Sigmoid colon (tissue), 7 donors: ENCODE measurements at regions of chr13 and their contacts with region 1.

Region 1: DNA sequence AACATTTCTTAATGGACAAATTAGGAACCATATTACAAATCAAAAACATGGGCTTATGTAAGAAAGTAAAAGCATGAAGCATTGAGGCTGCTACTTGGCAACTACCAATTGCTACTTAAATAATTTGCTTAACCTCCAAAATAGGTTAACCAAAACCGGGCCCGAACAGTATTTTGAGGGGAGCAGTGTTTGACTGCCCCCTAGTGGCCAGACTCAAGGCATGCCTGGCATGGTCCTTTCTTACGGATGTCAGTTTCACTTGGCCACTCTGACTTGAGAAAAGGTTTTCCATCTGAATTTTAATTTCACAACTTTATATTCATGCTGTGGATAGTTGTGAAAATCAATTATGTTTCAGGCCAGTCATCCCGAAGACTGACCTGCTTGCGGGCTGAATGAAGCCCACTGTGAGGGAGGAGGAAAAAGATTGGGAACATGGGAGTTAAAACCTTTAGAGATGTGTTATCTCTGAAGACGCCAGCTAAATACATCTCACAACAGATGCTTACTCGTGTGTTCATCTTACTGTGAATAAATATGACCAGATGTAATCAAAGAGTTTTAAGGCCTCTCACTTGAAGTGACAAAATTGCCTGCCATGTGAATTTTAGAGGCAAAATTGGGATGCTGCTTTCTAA is 2.9 kb downstream of the RXFP2 start:
- DNase-seq: peak; percentile 77
- H3K4me3 ChIP-seq: no peak overlapping the region
- H3K27ac ChIP-seq: no peak overlapping the region
- H3K4me1 ChIP-seq: no peaks in the 10 kb centered on the region
- H3K27me3 ChIP-seq: no peaks in the 10 kb centered on the region
- CTCF ChIP-seq: peak in 3 of 4 experiments; percentile 64 to 95 (median 76)
- EP300 ChIP-seq: no peak
- POLR2A ChIP-seq: no peak

Region 2: DNA sequence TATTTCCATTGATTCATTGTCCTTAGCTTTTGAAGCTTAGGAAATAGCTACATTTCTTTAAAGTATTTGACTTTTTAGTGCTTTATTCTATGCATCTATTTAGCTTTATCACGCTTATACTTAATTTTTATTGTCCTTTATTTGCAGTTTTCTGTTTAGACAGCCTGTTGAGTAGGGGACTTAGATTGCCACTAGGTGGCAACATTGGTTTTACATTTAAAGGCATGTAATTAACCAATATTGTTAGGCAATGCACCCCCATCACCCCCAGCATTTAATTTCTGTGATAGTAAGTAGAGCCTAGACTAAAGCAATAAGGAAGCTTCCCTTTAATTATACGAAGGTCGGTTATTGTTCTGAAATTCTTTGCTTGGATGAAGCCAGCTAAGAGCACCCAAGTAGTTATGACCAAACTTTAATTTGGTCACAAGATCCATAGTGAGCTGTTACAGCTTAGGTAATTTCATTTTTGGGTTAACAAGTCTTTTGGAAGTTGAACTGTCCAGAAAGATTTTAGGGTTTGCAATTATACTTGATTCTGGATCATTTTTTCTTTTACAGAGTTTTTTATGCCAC is 505.9 kb before region 1 on chr13:
- intact Hi-C with region 1: loop called (anchors 5 kb)
- DNase-seq: no peak
- H3K4me3 ChIP-seq: no peak overlapping the region
- H3K27ac ChIP-seq: no peak overlapping the region
- H3K4me1 ChIP-seq: no peaks in the 10 kb centered on the region
- H3K27me3 ChIP-seq: no peaks in the 10 kb centered on the region
- CTCF ChIP-seq: peak in 3 of 4 experiments; percentile 43 to 58 (median 47)
- EP300 ChIP-seq: no peak
- POLR2A ChIP-seq: no peak

Region 3: GRCh38 chr13:31431722-31432137 is 310.5 kb before region 1 on chr13:
- intact Hi-C with region 1: loop called (anchors 5 kb)
- DNase-seq: no peak
- H3K4me3 ChIP-seq: no peak overlapping the region
- H3K27ac ChIP-seq: no peak overlapping the region
- H3K4me1 ChIP-seq: no peaks in the 10 kb centered on the region
- H3K27me3 ChIP-seq: no peaks in the 10 kb centered on the region
- CTCF ChIP-seq: peak in 1 of 4 experiments; percentile 71
- EP300 ChIP-seq: no peak
- POLR2A ChIP-seq: no peak

Region 4: GRCh38 chr13:31504918-31505317 is 237.3 kb before region 1 on chr13:
- intact Hi-C with region 1: no loop called
- DNase-seq: no peak
- H3K4me3 ChIP-seq: no peak overlapping the region
- H3K27ac ChIP-seq: no peak overlapping the region
- H3K4me1 ChIP-seq: no peaks in the 10 kb centered on the region
- H3K27me3 ChIP-seq: no peaks in the 10 kb centered on the region
- CTCF ChIP-seq: no peak
- EP300 ChIP-seq: no peak
- POLR2A ChIP-seq: no peak

Region 5: DNA sequence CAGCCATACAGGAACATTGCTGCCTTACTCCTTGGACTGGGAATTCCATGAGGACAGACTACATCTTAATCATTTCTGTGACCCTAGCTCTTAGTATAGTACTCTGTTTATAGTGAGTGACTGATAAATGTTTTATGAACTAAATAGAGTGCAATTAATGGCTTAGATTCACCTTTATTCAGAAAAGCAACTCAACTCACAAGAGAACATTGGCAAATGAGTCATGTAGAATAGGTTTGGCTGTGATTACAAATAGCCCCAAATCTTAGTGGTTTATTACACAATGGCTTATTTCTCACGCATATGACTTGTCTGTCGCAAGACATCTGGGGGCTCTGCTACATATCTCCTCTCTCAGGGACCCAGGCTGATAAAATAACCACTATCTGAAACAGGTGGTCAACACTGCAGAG is 1152.4 kb after region 1 on chr13:
- intact Hi-C with region 1: no loop called
- DNase-seq: no peak
- H3K4me3 ChIP-seq: no peak overlapping the region
- H3K27ac ChIP-seq: no peak overlapping the region
- H3K4me1 ChIP-seq: no peaks in the 10 kb centered on the region
- H3K27me3 ChIP-seq: no peaks in the 10 kb centered on the region
- CTCF ChIP-seq: no peak
- EP300 ChIP-seq: no peak
- POLR2A ChIP-seq: no peak